ENCODE measurements at regions of chr19 and their contacts with region 1.

Region 1: DNA sequence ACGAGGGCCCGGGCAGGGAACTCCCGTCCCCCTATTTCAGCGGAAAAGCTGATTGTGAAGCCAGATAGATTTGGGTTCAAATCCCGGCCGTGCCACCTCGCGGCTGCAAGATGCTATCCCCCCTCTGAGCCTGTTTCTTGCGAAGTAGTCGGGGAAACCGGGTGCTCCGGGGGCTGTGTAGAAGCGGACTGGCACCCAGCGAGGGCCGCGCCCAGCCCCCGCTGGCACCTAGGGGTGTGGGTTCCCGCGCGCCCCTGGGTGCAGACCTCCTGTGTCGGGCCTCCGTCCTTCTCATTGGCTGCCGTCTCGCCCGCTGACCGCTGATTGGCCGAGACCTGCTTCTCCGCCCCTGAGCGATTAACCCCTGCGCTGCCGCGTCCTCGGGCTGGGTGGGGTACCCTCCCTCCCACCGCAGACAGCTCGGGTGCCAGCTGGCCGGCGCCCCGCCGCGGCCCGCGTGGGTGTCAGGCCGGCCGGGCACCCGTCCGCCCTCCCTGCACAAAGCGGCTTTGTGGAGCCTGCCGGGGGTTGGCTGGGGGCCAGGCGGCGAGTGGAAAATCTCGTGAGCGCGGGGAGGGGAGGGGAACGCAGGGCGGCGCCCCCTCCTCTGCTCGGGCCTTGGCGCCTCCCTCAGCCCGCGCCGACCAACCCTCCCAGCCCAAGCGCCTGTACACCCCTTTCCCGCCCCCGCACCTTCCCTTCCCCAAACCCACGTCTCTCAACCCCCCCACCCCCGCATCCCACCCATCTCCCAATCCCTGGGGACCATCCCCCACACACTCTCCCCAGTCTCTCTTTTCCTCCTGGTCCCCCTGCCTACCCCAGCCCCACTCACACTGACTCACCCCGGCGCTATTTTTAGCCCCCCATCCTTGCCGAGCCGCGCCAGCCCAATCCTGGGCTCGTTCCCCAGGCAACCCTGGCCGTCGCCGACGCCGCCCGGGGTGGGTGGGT is 11.4 kb downstream of the CIC start:
- DNase-seq: peak; percentile 81 to 89 (median 85)
- H3K4me3 ChIP-seq: peak overlapping the region; percentile 70
- H3K4me3 Mint-ChIP-seq: peak overlapping the region; percentile 80 to 97 (median 90)
- H3K27ac ChIP-seq: peak overlapping the region; percentile 77
- H3K27ac Mint-ChIP-seq: peak overlapping the region; percentile 79 to 96 (median 87)
- H3K4me1 ChIP-seq: peaks cover 64% of the 10 kb centered on the region
- H3K4me1 Mint-ChIP-seq: peaks cover 36 to 46% (median 45%) of the 10 kb centered on the region in 3 donors
- H3K27me3 ChIP-seq: no peaks in the 10 kb centered on the region
- H3K27me3 Mint-ChIP-seq: peaks cover 0 to 5% of the 10 kb centered on the region in 2 donors

Region 2: GRCh38 chr19:42108527-42109389 is 171.7 kb before region 1 on chr19:
- CTCF ChIA-PET with region 1: interaction called, 15 read pairs
- POLR2A ChIA-PET with region 1: no interaction called
- DNase-seq: peak; percentile 79 to 91 (median 83)
- H3K4me3 ChIP-seq: no peak overlapping the region
- H3K4me3 Mint-ChIP-seq: no peak overlapping the region
- H3K27ac ChIP-seq: no peak overlapping the region
- H3K27ac Mint-ChIP-seq: peak overlapping the region in 5 of 8 donors; percentile 36 to 77 (median 58)
- H3K4me1 ChIP-seq: peaks cover 6% of the 10 kb centered on the region
- H3K4me1 Mint-ChIP-seq: peaks cover 3 to 12% (median 11%) of the 10 kb centered on the region in 3 donors
- H3K27me3 ChIP-seq: no peaks in the 10 kb centered on the region
- H3K27me3 Mint-ChIP-seq: no peaks in the 10 kb centered on the region

Region 3: GRCh38 chr19:42176990-42177685 is 103.3 kb before region 1 on chr19:
- CTCF ChIA-PET with region 1: interaction called, 10 read pairs
- POLR2A ChIA-PET with region 1: no interaction called
- DNase-seq: peak; percentile 65 to 83 (median 72)
- H3K4me3 ChIP-seq: peak overlapping the region; percentile 17
- H3K4me3 Mint-ChIP-seq: peak overlapping the region in 2 of 7 donors; percentile 45 to 83
- H3K27ac ChIP-seq: no peak overlapping the region
- H3K27ac Mint-ChIP-seq: no peak overlapping the region
- H3K4me1 ChIP-seq: peaks cover 12% of the 10 kb centered on the region
- H3K4me1 Mint-ChIP-seq: peaks cover 10 to 18% (median 13%) of the 10 kb centered on the region in 3 donors
- H3K27me3 ChIP-seq: peaks cover 18% of the 10 kb centered on the region
- H3K27me3 Mint-ChIP-seq: peaks cover 7 to 23% of the 10 kb centered on the region in 2 donors

Region 4: DNA sequence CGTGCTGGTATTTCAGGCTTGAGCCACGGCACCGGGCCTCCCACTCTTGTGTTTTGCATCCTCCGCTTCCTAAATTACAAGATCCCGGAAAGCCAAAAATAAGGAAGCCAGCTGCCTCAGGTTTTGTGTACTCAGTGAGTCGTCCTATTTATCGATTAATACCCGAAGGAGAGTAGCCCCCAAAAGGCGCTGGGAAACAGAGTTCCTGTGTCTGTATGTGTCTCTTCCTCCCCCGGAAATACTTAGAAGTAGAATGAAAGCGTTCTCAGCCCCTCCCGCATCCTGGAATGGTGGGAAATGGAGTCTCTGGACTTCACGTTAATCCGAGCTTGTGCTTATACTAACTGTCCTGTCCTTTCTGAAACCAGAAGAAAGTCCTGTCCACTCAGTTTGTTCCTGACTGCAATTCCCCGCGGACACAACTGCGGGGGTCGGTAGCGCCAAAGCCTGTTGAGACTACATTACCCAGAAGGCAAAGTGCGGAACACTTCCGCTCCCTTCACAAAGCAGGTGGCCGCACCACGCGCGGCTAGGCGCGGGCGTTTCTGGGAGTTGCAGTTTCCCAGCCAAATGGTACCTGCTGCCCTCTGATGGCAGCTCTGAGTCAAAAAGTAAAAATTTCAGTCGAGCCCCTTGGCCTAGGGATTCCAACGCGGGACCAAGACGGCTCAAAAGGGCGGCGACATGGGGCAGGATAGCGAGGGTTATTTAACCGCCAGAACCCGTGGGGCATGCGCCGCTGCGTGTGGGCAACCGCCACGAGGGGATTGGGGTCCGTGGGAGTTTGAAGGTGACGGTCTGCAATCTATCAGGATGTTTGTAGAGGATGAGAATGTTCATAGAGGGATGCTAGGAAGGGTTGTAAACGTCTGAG is 35.9 kb before region 1 on chr19:
- CTCF ChIA-PET with region 1: interaction called, 72 read pairs
- POLR2A ChIA-PET with region 1: interaction called, 26 read pairs
- DNase-seq: peak; percentile 84 to 94 (median 86)
- H3K4me3 ChIP-seq: peak overlapping the region; percentile 81
- H3K4me3 Mint-ChIP-seq: peak overlapping the region; percentile 94 to 99 (median 96)
- H3K27ac ChIP-seq: peak overlapping the region; percentile 66
- H3K27ac Mint-ChIP-seq: peak overlapping the region; percentile 95 to 99 (median 98)
- H3K4me1 ChIP-seq: peaks cover 40% of the 10 kb centered on the region
- H3K4me1 Mint-ChIP-seq: peaks cover 42 to 58% (median 45%) of the 10 kb centered on the region in 3 donors
- H3K27me3 ChIP-seq: no peaks in the 10 kb centered on the region
- H3K27me3 Mint-ChIP-seq: peaks cover 0 to 2% of the 10 kb centered on the region in 2 donors

Region 5: DNA sequence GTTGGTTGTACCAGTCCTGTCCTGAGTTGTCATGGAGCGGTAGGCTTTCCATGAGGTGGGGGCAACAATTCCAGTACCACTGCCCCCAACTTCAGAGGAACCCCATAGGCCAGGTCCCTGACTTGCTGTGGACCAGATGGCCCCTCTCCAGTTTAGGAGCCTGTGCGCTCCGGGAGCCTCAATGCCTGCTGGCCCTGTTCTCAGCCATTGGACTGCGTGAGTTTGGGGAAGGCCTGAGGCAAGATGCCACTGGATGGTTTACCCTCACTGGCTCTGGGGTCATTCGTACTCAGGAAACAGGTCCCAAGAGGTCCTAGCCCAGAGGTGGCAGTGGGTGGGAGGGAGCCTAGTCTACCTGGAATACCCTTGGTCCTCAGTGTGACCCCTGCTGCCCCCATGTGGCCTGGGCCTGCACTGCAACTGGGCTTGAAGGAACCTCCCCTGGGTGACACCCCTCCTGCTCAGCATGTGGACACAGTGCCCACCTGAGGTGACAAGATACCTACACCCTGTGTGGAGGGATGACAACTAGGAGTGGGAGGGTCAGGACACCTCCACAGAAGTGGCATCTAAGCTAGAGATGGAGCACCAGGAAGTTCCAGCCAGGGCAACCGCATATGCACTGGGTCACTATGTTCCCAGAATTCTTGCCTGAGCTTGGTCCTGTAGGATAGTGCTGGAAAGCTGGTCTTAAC is 15.5 kb after region 1 on chr19:
- CTCF ChIA-PET with region 1: interaction called, 10 read pairs
- POLR2A ChIA-PET with region 1: interaction called, 3 read pairs
- DNase-seq: peak; percentile 77 to 92 (median 85)
- H3K4me3 ChIP-seq: no peak overlapping the region
- H3K4me3 Mint-ChIP-seq: no peak overlapping the region
- H3K27ac ChIP-seq: no peak overlapping the region
- H3K27ac Mint-ChIP-seq: peak overlapping the region in 5 of 8 donors; percentile 55 to 70 (median 61)
- H3K4me1 ChIP-seq: no peaks in the 10 kb centered on the region
- H3K4me1 Mint-ChIP-seq: peaks cover 5 to 17% (median 10%) of the 10 kb centered on the region in 3 donors
- H3K27me3 ChIP-seq: no peaks in the 10 kb centered on the region
- H3K27me3 Mint-ChIP-seq: no peaks in the 10 kb centered on the region

Measured in CD8-positive, alpha-beta memory T cell (primary cell).